ENCODE measurements at regions of chr5 and their contacts with region 1.

Region 1: GRCh38 chr5:2029206-2029605 is 146.5 kb upstream of the IRX4 start:
- DNase-seq: no peak
- ATAC-seq: peak; percentile 71
- H3K4me3 ChIP-seq: no peak overlapping the region
- H3K27ac ChIP-seq: no peak overlapping the region
- H3K4me1 ChIP-seq: no peaks in the 10 kb centered on the region
- H3K27me3 ChIP-seq: peaks cover 0 to 20% of the 10 kb centered on the region in 2 donors
- CTCF ChIP-seq: no peak

Region 2: DNA sequence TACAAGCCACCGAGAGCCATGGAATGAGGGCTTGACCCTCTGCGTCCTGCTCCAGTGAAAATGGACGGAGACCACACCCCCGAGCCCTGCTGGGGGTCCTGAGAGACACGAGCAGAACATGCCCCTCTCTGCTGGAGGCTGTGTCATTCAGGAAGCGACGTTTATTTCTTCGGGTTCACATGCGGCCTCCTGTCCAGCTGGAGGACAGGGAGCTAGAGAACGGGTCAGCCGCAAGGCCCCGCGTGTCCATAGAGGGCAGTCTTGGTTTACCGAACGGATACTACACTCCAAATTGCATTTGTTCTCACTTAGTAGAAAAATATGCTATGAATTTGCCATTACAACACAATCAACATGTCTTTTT is 265.7 kb before region 1 on chr5:
- intact Hi-C with region 1: loop called in 1 of 2 experiments (anchors 10 kb)
- DNase-seq: peak; percentile 35 to 68 (median 53)
- ATAC-seq: peak; percentile 73
- H3K4me3 ChIP-seq: no peak overlapping the region
- H3K27ac ChIP-seq: no peak overlapping the region
- H3K4me1 ChIP-seq: no peaks in the 10 kb centered on the region
- H3K27me3 ChIP-seq: peaks cover 0 to 77% of the 10 kb centered on the region in 2 donors
- CTCF ChIP-seq: peak; percentile 41 to 47

Region 3: DNA sequence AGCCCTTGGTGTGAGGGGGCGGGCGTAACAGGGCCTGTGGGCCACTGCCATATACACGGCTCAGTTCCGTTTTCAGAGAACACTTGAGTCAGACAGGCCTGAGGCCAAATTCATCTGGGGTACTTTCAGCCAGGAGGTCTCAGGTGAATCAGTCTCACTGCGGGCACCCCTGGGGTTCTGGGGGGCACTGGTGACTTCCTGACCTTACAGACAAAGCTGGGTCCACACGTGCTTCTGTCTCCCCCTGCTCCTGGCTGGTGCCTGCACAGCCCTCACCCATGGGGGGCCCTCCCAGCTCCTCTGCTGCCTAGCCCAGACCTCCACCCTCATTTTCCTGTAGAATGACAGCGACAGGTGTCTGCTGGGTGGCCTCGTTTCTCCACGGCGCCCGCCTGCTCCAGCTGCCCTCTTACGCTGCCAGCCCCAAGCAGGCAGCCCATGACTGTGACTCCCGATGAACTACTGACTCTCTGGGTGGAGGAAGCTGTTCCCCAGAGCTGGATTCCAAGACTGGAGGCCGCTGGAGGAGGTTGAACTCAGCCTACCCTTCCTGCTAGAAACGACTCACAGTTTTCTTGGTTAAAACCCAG is 227.6 kb after region 1 on chr5:
- intact Hi-C with region 1: no loop called
- DNase-seq: peak in 1 of 4 donors; percentile 48
- ATAC-seq: no peak
- H3K4me3 ChIP-seq: no peak overlapping the region
- H3K27ac ChIP-seq: no peak overlapping the region
- H3K4me1 ChIP-seq: no peaks in the 10 kb centered on the region
- H3K27me3 ChIP-seq: peaks cover 0 to 8% of the 10 kb centered on the region in 2 donors
- CTCF ChIP-seq: no peak

Region 4: GRCh38 chr5:2592766-2593165 is 563.6 kb after region 1 on chr5:
- intact Hi-C with region 1: no loop called
- DNase-seq: no peak
- ATAC-seq: no peak
- H3K4me3 ChIP-seq: no peak overlapping the region
- H3K27ac ChIP-seq: no peak overlapping the region
- H3K4me1 ChIP-seq: no peaks in the 10 kb centered on the region
- H3K27me3 ChIP-seq: peaks cover 0 to 15% of the 10 kb centered on the region in 2 donors
- CTCF ChIP-seq: no peak

Measured in left lung (tissue), 14 donors.